ENCODE measurements at regions of chr10 and their contacts with region 1.

Region 1: GRCh38 chr10:108204479-108205305 is 1040.2 kb upstream of the SORCS1 start:
- DNase-seq: peak; percentile 11
- ATAC-seq: peak; percentile 95
- H3K4me3 ChIP-seq: no peak overlapping the region
- H3K27ac ChIP-seq: no peak overlapping the region
- H3K4me1 ChIP-seq: no peaks in the 10 kb centered on the region
- H3K27me3 ChIP-seq: no peaks in the 10 kb centered on the region
- CTCF ChIP-seq: peak; percentile 72 to 85 (median 80)
- EP300 ChIP-seq: no peak
- POLR2A ChIP-seq: no peak
- RAD21 ChIP-seq: peak; percentile 90

Region 2: DNA sequence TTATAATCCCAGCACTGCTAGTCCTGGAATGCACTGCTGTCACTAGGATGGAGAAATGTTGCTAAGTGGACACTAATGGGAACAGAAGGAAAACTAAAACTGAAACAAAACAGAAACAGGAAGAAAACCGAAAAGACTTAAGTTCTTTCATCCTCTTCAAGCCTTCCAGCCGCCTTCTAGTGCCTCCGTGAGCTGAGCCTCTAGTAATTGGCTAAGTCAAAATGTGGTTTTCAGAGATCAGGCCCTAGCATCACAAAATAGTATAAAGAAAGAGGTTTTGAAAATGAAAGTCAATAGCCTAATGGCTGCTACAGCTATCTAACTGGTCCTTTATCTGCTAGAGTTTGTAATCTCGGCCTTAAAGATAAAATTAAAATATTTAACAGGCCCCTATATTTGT is 786.3 kb before region 1 on chr10:
- CTCF ChIA-PET with region 1: interaction called, 6 read pairs
- POLR2A ChIA-PET with region 1: no interaction called
- RAD21 ChIA-PET with region 1: interaction called, 4 read pairs
- SMC1A ChIA-PET with region 1: interaction called, 3 read pairs
- in situ Hi-C with region 1: no loop called
- intact Hi-C with region 1: loop called (anchors 5 kb)
- DNase-seq: peak; percentile 33
- ATAC-seq: peak; percentile 81
- H3K4me3 ChIP-seq: peak overlapping the region; percentile 4; the same call in 1 of the 2 replicates
- H3K27ac ChIP-seq: peak overlapping the region; percentile 53
- H3K4me1 ChIP-seq: peaks cover 21% of the 10 kb centered on the region
- H3K27me3 ChIP-seq: no peaks in the 10 kb centered on the region
- CTCF ChIP-seq: no peak
- EP300 ChIP-seq: no peak
- POLR2A ChIP-seq: no peak
- RAD21 ChIP-seq: no peak

Region 3: DNA sequence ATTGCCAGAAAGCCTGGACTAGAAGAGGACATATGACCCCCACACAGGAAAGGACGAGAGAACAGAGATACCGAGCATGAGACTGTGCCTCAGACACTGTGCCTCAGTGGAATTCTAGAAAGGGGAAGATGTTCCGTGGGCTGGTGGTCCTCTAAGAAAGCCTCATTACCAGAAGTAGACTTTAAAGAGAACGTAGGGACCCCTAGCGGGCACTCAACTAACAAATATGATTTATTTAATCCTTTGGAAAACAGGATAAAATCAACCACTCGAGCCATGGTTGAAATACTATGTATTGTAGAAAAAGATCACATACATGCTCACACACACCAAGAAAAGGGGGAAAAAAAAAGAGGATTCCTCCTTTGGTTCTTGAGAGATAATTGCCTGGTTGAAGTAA is 339.0 kb before region 1 on chr10:
- CTCF ChIA-PET with region 1: interaction called, 19 read pairs
- POLR2A ChIA-PET with region 1: no interaction called
- RAD21 ChIA-PET with region 1: interaction called, 17 read pairs
- SMC1A ChIA-PET with region 1: interaction called, 14 read pairs
- in situ Hi-C with region 1: no loop called
- intact Hi-C with region 1: no loop called
- DNase-seq: no peak
- ATAC-seq: no peak
- H3K4me3 ChIP-seq: no peak overlapping the region
- H3K27ac ChIP-seq: no peak overlapping the region
- H3K4me1 ChIP-seq: no peaks in the 10 kb centered on the region
- H3K27me3 ChIP-seq: no peaks in the 10 kb centered on the region
- CTCF ChIP-seq: no peak
- EP300 ChIP-seq: no peak
- POLR2A ChIP-seq: no peak
- RAD21 ChIP-seq: no peak

Region 4: GRCh38 chr10:107986571-107986970 is 218.1 kb before region 1 on chr10:
- CTCF ChIA-PET with region 1: interaction called, 9 read pairs
- POLR2A ChIA-PET with region 1: interaction called, 3 read pairs
- RAD21 ChIA-PET with region 1: interaction called, 11 read pairs
- SMC1A ChIA-PET with region 1: interaction called, 6 read pairs
- in situ Hi-C with region 1: no loop called
- intact Hi-C with region 1: no loop called
- DNase-seq: no peak
- ATAC-seq: no peak
- H3K4me3 ChIP-seq: no peak overlapping the region
- H3K27ac ChIP-seq: no peak overlapping the region
- H3K4me1 ChIP-seq: no peaks in the 10 kb centered on the region
- H3K27me3 ChIP-seq: no peaks in the 10 kb centered on the region
- CTCF ChIP-seq: no peak
- EP300 ChIP-seq: no peak
- POLR2A ChIP-seq: no peak
- RAD21 ChIP-seq: no peak

Region 5: GRCh38 chr10:108034829-108035228 is 169.9 kb before region 1 on chr10:
- CTCF ChIA-PET with region 1: interaction called, 8 read pairs
- POLR2A ChIA-PET with region 1: interaction called, 3 read pairs
- RAD21 ChIA-PET with region 1: interaction called, 16 read pairs
- SMC1A ChIA-PET with region 1: interaction called, 9 read pairs
- in situ Hi-C with region 1: no loop called
- intact Hi-C with region 1: no loop called
- DNase-seq: no peak
- ATAC-seq: peak; percentile 63
- H3K4me3 ChIP-seq: no peak overlapping the region
- H3K27ac ChIP-seq: no peak overlapping the region
- H3K4me1 ChIP-seq: no peaks in the 10 kb centered on the region
- H3K27me3 ChIP-seq: no peaks in the 10 kb centered on the region
- CTCF ChIP-seq: no peak
- EP300 ChIP-seq: no peak
- POLR2A ChIP-seq: no peak
- RAD21 ChIP-seq: no peak

Region 6: GRCh38 chr10:108230478-108231170 is 25.9 kb after region 1 on chr10:
- CTCF ChIA-PET with region 1: interaction called, 11 read pairs
- POLR2A ChIA-PET with region 1: no interaction called
- RAD21 ChIA-PET with region 1: no interaction called
- SMC1A ChIA-PET with region 1: interaction called, 4 read pairs
- in situ Hi-C with region 1: no loop called
- intact Hi-C with region 1: no loop called
- DNase-seq: no peak
- ATAC-seq: no peak
- H3K4me3 ChIP-seq: no peak overlapping the region
- H3K27ac ChIP-seq: no peak overlapping the region
- H3K4me1 ChIP-seq: no peaks in the 10 kb centered on the region
- H3K27me3 ChIP-seq: no peaks in the 10 kb centered on the region
- CTCF ChIP-seq: no peak
- EP300 ChIP-seq: no peak
- POLR2A ChIP-seq: no peak
- RAD21 ChIP-seq: no peak

Region 7: GRCh38 chr10:108393089-108393488 is 188.4 kb after region 1 on chr10:
- CTCF ChIA-PET with region 1: no interaction called
- POLR2A ChIA-PET with region 1: no interaction called
- RAD21 ChIA-PET with region 1: no interaction called
- SMC1A ChIA-PET with region 1: no interaction called
- in situ Hi-C with region 1: no loop called
- intact Hi-C with region 1: no loop called
- DNase-seq: no peak
- ATAC-seq: no peak
- H3K4me3 ChIP-seq: no peak overlapping the region
- H3K27ac ChIP-seq: no peak overlapping the region
- H3K4me1 ChIP-seq: no peaks in the 10 kb centered on the region
- H3K27me3 ChIP-seq: no peaks in the 10 kb centered on the region
- CTCF ChIP-seq: no peak
- EP300 ChIP-seq: no peak
- POLR2A ChIP-seq: no peak
- RAD21 ChIP-seq: no peak

Region 8: GRCh38 chr10:108496106-108496505 is 291.4 kb after region 1 on chr10:
- CTCF ChIA-PET with region 1: no interaction called
- POLR2A ChIA-PET with region 1: no interaction called
- RAD21 ChIA-PET with region 1: no interaction called
- SMC1A ChIA-PET with region 1: no interaction called
- in situ Hi-C with region 1: no loop called
- intact Hi-C with region 1: no loop called
- DNase-seq: no peak
- ATAC-seq: no peak
- H3K4me3 ChIP-seq: no peak overlapping the region
- H3K27ac ChIP-seq: no peak overlapping the region
- H3K4me1 ChIP-seq: no peaks in the 10 kb centered on the region
- H3K27me3 ChIP-seq: no peaks in the 10 kb centered on the region
- CTCF ChIP-seq: no peak
- EP300 ChIP-seq: no peak
- POLR2A ChIP-seq: no peak
- RAD21 ChIP-seq: no peak

Measured in GM12878 (cell line).